Naive thymus-derived CD8-positive, alpha-beta T cell (primary cell): ENCODE measurements at regions of chr6 and their contacts with region 1.

Region 1: DNA sequence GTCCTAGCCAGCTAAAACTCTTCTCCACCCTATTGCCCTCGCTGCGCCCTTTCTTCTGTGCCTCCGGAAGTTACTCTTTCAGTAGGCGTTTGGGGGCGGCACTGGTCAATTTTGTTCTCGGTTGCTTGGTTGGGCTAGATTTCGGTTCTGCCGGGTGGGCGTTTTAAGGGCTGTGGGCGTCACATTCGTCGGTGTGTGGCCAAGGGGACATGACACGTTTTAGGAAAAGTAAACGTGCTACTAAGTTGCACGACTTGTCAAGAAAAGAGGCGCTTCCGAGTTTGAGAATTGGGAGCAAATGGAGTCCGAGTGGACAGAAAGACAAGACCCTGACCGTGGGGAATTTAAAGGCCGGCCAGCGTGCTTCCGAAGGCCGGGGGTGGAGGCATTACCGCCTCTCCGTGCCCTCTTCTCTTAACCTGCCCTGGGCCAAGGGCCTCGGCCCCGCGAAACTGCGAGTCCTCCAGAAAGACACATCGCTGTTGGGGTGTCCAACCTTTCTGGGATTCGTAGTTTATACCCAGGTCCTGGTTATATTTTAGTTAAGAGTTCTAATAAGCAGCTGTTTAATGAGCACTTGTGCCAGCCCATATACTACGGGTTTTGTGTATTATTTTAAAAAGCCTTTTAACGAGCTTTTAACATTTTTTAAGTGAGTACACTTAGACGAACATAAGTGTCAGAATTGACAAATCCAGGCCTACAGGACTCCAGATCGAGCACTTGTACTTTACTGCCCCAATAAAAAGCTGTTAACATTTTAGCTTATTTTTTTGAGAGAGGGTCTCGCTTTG is 661 bp upstream of the BAG6 start:
- DNase-seq: peak in 5 of 10 donors; percentile 65 to 94 (median 87)
- ATAC-seq: peak; percentile 74 to 75
- H3K4me3 Mint-ChIP-seq: peak overlapping the region; percentile 88 to 99 (median 95)
- H3K27ac Mint-ChIP-seq: peak overlapping the region; percentile 97 to 100 (median 100)
- H3K4me1 Mint-ChIP-seq: peaks cover 25 to 70% (median 67%) of the 10 kb centered on the region in 4 donors
- H3K27me3 Mint-ChIP-seq: peaks cover 0 to 2% (median 0%) of the 10 kb centered on the region in 5 donors

Region 2: DNA sequence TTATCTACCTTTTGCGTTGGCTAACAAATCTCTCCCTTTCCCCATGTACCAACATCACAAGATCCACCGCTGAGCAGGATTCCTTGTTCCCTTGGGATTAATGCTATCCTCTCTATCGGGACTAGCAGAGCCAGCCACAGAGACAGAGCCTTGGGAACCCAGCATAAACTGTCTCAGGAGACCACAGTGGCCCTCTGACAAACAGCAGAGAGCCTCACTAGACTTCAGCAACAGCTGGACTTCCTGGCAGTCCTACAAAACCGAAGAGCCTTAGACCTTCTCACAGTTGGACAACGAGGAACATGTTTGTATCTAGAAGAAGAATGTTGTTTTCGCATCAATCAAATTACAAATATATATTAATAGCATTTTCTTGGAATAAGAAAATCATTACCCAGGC is 443.0 kb before region 1 on chr6:
- POLR2A ChIA-PET with region 1: no interaction called
- DNase-seq: no peak
- ATAC-seq: no peak
- H3K4me3 Mint-ChIP-seq: no peak overlapping the region
- H3K27ac Mint-ChIP-seq: peak overlapping the region in 1 of 10 donors; percentile 63
- H3K4me1 Mint-ChIP-seq: peaks cover 8 to 14% (median 9%) of the 10 kb centered on the region in 4 donors
- H3K27me3 Mint-ChIP-seq: no peaks in the 10 kb centered on the region

Region 3: DNA sequence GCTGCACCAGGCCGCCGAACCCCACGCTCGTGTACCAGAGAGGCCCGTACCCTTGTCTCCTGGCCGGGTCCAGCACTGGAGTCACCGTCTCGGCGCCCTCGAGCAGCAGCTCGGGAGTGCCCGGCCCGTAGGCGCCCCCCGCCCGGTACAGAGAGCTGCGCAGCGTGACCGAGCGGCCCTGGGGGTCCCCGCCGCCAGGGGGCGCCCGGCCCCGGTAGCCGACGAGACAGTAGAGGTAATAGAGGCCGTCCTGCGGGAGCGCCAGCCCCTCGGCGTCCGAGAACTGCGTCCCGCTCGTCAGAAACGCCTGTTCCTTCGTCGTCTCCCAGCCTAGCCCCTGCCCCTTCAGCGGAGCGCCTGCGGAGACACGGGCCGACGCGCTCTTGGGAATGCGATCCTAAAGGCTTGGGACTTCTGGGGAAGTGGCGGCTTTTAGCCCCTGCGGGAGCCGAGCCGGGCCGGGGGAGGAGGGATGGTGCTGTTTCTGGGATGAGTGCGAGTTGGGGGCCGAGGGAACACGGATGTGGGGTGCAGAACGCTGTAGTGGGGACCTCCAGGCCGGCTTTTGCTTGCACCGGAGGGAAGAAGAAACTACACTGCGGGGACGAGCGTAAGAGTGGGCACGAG is 72.2 kb before region 1 on chr6:
- POLR2A ChIA-PET with region 1: interaction called, 26 read pairs
- DNase-seq: peak; percentile 77 to 95 (median 90)
- ATAC-seq: peak; percentile 79
- H3K4me3 Mint-ChIP-seq: peak overlapping the region; percentile 97 to 100 (median 99)
- H3K27ac Mint-ChIP-seq: peak overlapping the region; percentile 92 to 100 (median 98)
- H3K4me1 Mint-ChIP-seq: peaks cover 32 to 87% (median 73%) of the 10 kb centered on the region in 4 donors
- H3K27me3 Mint-ChIP-seq: no peaks in the 10 kb centered on the region

Region 4: GRCh38 chr6:31626952-31627351 is 26.2 kb before region 1 on chr6:
- POLR2A ChIA-PET with region 1: interaction called, 49 read pairs
- DNase-seq: no peak
- ATAC-seq: no peak
- H3K4me3 Mint-ChIP-seq: no peak overlapping the region
- H3K27ac Mint-ChIP-seq: peak overlapping the region in 2 of 10 donors; percentile 36 to 81
- H3K4me1 Mint-ChIP-seq: peaks cover 12 to 23% (median 19%) of the 10 kb centered on the region in 4 donors
- H3K27me3 Mint-ChIP-seq: no peaks in the 10 kb centered on the region

Region 5: GRCh38 chr6:31665501-31666336 is 12.6 kb after region 1 on chr6 and contains the start of gene CSNK2B:
- POLR2A ChIA-PET with region 1: interaction called, 223 read pairs
- DNase-seq: peak; percentile 94 to 98 (median 98)
- ATAC-seq: peak; percentile 85 to 86
- H3K4me3 Mint-ChIP-seq: peak within 1 kb of the TSS; percentile 93 to 100 (median 97)
- H3K27ac Mint-ChIP-seq: peak within 1 kb of the TSS; percentile 96 to 99 (median 98)
- H3K4me1 Mint-ChIP-seq: peaks cover 21 to 73% (median 67%) of the 10 kb centered on the region in 4 donors
- H3K27me3 Mint-ChIP-seq: no peaks in the 10 kb centered on the region
- polyA plus RNA-seq, gene CSNK2B: 214 to 230 (median 217) TPM

Region 6: GRCh38 chr6:31827286-31828079 is 174.4 kb after region 1 on chr6 and contains the start of gene HSPA1B:
- POLR2A ChIA-PET with region 1: interaction called, 13 read pairs
- DNase-seq: peak; percentile 59 to 90 (median 76)
- ATAC-seq: peak; percentile 72 to 74
- H3K4me3 Mint-ChIP-seq: peak within 1 kb of the TSS; percentile 84 to 96 (median 92)
- H3K27ac Mint-ChIP-seq: peak within 1 kb of the TSS; percentile 81 to 99 (median 96)
- H3K4me1 Mint-ChIP-seq: peaks cover 8 to 53% (median 33%) of the 10 kb centered on the region in 4 donors
- H3K27me3 Mint-ChIP-seq: no peaks in the 10 kb centered on the region
- polyA plus RNA-seq, gene HSPA1B: 0.28 to 1.3 (median 1.2) TPM

Region 7: GRCh38 chr6:31945507-31946369 is 292.6 kb after region 1 on chr6 and contains the start of gene CFB:
- POLR2A ChIA-PET with region 1: no interaction called
- DNase-seq: peak in 1 of 10 donors; percentile 19
- ATAC-seq: no peak
- H3K4me3 Mint-ChIP-seq: no peak within 1 kb of the TSS
- H3K27ac Mint-ChIP-seq: peak within 1 kb of the TSS in 4 of 10 donors; percentile 10 to 59 (median 17)
- H3K4me1 Mint-ChIP-seq: peaks cover 0 to 15% (median 1%) of the 10 kb centered on the region in 4 donors
- H3K27me3 Mint-ChIP-seq: peaks cover 0 to 9% (median 8%) of the 10 kb centered on the region in 5 donors
- polyA plus RNA-seq, gene CFB: 0.22 to 0.61 TPM in 2 of 3 donors, not detected in the other